AG04449 (cell line): ENCODE measurements at regions of chr11 and their contacts with region 1.

Region 1: DNA sequence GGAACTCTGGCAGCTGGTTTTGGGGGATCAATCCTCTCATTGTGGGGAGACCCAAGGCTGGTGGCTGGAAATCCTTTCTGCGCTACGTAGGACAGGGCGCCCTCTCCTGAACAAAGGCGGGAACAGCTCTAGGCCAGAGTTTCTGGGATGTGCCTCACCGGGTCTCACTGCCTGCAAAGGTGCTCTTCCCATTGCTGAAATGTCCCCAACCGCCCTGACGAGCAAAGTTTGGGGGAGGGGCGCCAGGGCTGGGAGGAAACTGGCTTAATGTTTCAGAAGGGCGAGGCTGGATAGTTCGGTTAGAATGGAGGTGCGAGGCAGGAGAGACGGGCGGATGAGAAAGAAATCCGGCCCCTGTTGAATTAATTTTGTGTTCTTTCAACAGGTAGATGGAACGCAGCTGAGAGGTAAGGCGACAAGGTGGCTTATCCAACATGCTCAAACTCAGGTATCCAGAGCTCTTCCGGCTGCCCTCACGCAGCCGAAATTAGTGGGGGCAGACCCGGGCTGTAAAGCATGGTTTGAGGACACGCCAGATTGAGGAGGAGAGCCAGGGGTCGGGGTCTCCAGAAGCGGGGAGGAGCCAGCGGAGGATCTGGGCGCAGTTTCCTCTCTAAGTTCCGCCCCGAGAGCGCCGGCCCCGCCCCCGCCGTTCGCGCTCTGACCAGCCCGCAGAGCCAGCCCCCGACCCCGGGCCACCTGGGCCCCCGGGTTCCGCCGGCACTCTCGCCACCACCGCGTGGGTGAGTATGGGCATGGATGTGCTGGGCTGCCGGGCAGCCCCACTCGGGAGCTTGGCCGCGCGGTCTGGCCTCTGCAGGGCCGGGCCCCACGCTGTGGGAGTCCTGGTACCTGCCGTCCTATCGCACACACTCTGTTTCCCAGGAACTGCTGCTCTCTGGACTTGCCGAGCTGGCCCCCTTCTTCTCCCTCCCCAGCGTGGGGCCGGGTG is at the start of gene PGAP2:
- DNase-seq: no peak
- H3K4me3 ChIP-seq: peak within 1 kb of the TSS; percentile 77
- CTCF ChIP-seq: peak; percentile 81

Region 2: GRCh38 chr11:3786781-3787428 is 21.3 kb before region 1 on chr11:
- CTCF ChIA-PET with region 1: interaction called, 15 read pairs
- POLR2A ChIA-PET with region 1: no interaction called
- DNase-seq: no peak
- H3K4me3 ChIP-seq: no peak overlapping the region
- CTCF ChIP-seq: no peak

Region 3: DNA sequence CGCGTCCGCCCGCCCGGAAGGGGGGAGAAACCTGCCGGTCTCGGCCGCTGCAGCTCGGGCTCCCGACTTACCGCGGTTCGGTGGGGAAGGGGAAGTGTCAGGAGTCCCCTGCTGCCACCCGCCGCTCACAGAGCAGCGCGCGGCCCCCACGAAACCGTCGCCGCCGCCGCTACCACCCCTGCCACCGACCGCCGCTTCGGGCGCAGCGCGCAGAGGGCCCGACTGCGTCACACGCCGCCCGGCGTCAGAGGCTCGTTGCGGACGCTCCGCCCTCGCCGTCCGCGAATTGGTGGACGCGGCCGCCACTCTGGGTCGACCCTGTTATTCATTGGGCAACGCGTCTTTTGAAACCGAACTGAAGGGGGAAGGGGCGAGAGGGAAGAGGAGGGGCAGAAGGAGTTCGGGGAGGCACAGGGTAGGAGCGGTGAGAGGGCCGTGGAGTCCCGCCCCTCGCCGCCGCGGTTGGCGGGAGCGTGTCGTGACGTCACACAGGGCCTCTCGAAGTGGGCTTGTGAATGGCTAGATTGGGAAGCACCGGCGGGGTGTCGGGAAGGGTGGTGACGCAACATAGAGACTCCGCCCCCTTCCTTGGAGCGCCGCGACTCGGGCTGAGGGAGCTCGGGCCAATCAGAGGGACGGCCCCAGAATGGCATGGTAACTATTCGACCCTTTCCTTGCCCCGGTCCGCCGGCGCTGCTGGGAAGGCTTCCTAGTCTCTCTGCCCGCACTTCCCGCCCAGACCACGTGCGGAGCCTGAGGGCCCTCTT is 10.7 kb before region 1 on chr11 and contains the start of gene NUP98:
- CTCF ChIA-PET with region 1: interaction called, 39 read pairs
- POLR2A ChIA-PET with region 1: interaction called, 5 read pairs
- DNase-seq: peak; percentile 99
- H3K4me3 ChIP-seq: peak within 1 kb of the TSS; percentile 97
- CTCF ChIP-seq: no peak

Region 4: GRCh38 chr11:3841426-3842350 is 33.5 kb after region 1 on chr11:
- CTCF ChIA-PET with region 1: interaction called, 21 read pairs
- POLR2A ChIA-PET with region 1: no interaction called
- DNase-seq: no peak
- H3K4me3 ChIP-seq: peak overlapping the region; percentile 73
- CTCF ChIP-seq: peak; percentile 91